Mammary epithelial cell (primary cell): ENCODE measurements at regions of chr9 and their contacts with region 1.

Region 1: GRCh38 chr9:119556129-119556875 is 187.1 kb upstream of the BRINP1 start:
- DNase-seq: peak; percentile 47
- H3K4me3 ChIP-seq: peak overlapping the region in 2 of 3 experiments; percentile 14 to 26
- H3K27ac ChIP-seq: no peak overlapping the region
- H3K4me1 ChIP-seq: no peaks in the 10 kb centered on the region
- H3K27me3 ChIP-seq: no peaks in the 10 kb centered on the region
- CTCF ChIP-seq: peak; percentile 90 to 97

Region 2: GRCh38 chr9:119375892-119376291 is 180.4 kb before region 1 on chr9:
- CTCF ChIA-PET with region 1: no interaction called
- dilution Hi-C with region 1: no loop called
- in situ Hi-C with region 1: no loop called
- intact Hi-C with region 1: loop called (anchors 5 kb)
- DNase-seq: peak; percentile 33
- H3K4me3 ChIP-seq: no peak overlapping the region
- H3K27ac ChIP-seq: no peak overlapping the region
- H3K4me1 ChIP-seq: no peaks in the 10 kb centered on the region
- H3K27me3 ChIP-seq: peaks cover 2% of the 10 kb centered on the region
- CTCF ChIP-seq: peak; percentile 59 to 71

Region 3: GRCh38 chr9:119968836-119969707 is 412.8 kb after region 1 on chr9:
- CTCF ChIA-PET with region 1: no interaction called
- dilution Hi-C with region 1: no loop called
- in situ Hi-C with region 1: loop called in 1 of 2 experiments (anchors 10 kb)
- intact Hi-C with region 1: loop called (anchors 1 kb)
- DNase-seq: peak; percentile 45
- H3K4me3 ChIP-seq: no peak overlapping the region
- H3K27ac ChIP-seq: no peak overlapping the region
- H3K4me1 ChIP-seq: peaks cover 4% of the 10 kb centered on the region
- H3K27me3 ChIP-seq: peaks cover 2% of the 10 kb centered on the region
- CTCF ChIP-seq: peak; percentile 96 to 97

Region 4: DNA sequence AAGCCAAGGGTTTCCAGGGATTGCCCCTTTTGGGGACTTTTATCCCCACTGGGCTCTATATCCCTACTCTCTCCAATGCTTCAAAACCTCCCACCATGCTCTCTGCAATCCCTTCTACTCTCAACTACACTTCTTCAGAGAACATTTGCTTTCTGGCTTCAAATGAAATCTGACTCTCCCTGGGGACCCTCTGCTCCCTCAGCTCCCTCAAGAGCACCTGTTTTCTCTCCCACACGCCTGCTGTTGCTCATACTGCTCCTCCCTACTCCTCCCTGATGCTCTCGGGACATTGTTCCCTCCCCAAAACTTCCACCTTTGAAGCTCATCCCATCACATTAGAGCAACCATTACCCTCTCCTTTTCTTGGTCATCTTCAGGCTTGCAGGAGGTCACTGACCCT is 678.8 kb after region 1 on chr9:
- CTCF ChIA-PET with region 1: no interaction called
- dilution Hi-C with region 1: no loop called
- in situ Hi-C with region 1: no loop called
- intact Hi-C with region 1: loop called (anchors 10 kb)
- DNase-seq: no peak
- H3K4me3 ChIP-seq: no peak overlapping the region
- H3K27ac ChIP-seq: no peak overlapping the region
- H3K4me1 ChIP-seq: no peaks in the 10 kb centered on the region
- H3K27me3 ChIP-seq: no peaks in the 10 kb centered on the region
- CTCF ChIP-seq: no peak

Region 5: DNA sequence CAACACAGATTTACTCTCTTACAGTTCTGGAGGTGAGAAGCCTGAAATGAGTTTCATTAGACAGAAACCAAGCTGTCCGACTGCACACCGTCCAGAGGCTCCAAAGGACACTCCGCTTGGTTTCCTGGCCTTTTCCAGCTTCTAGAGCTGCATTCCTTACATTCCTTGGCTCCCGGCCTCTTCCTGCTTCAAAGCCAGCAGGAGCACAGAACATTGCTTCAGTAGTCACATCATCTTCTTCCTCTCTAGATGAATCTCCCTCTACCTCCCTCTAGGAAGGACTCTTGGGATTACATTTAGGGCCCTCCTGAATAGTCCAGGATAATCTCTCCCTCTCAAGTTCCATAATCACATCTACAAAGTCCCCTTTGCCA is 810.3 kb after region 1 on chr9:
- CTCF ChIA-PET with region 1: no interaction called
- dilution Hi-C with region 1: no loop called
- in situ Hi-C with region 1: loop called in 1 of 2 experiments (anchors 25 kb)
- intact Hi-C with region 1: no loop called
- DNase-seq: peak; percentile 49
- H3K4me3 ChIP-seq: no peak overlapping the region
- H3K27ac ChIP-seq: no peak overlapping the region
- H3K4me1 ChIP-seq: peaks cover 7% of the 10 kb centered on the region
- H3K27me3 ChIP-seq: no peaks in the 10 kb centered on the region
- CTCF ChIP-seq: peak; percentile 33 to 38

Region 6: DNA sequence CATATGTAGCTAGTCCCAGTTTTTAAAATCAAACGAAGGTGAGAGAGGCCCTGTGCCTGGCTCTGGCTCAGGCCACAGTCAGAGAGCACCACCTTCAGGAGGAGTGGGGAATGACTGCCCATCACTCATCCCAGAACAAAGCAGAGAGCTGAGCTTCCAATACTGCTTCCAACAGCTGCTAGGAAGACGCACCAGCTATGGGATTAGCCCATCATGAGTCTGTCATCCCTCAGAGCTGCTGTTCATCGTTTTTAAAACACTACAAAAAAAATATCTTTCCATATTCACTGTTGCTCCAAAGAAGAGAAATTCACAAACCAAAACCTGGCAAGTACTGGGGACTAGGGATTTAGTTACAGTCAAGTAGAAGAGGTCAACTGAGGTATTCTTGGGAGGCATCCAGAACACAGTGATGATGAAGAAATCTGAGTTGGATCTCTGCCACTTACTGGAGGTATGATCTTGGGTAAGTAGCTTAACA is 921.3 kb after region 1 on chr9:
- CTCF ChIA-PET with region 1: no interaction called
- dilution Hi-C with region 1: no loop called
- in situ Hi-C with region 1: no loop called
- intact Hi-C with region 1: loop called (anchors 1 kb)
- DNase-seq: peak; percentile 75
- H3K4me3 ChIP-seq: no peak overlapping the region
- H3K27ac ChIP-seq: no peak overlapping the region
- H3K4me1 ChIP-seq: peaks cover 13% of the 10 kb centered on the region
- H3K27me3 ChIP-seq: no peaks in the 10 kb centered on the region
- CTCF ChIP-seq: peak; percentile 93 to 96